Right cardiac atrium (tissue), 5 donors: ENCODE measurements at regions of chr3 and their contacts with region 1.

Region 1: DNA sequence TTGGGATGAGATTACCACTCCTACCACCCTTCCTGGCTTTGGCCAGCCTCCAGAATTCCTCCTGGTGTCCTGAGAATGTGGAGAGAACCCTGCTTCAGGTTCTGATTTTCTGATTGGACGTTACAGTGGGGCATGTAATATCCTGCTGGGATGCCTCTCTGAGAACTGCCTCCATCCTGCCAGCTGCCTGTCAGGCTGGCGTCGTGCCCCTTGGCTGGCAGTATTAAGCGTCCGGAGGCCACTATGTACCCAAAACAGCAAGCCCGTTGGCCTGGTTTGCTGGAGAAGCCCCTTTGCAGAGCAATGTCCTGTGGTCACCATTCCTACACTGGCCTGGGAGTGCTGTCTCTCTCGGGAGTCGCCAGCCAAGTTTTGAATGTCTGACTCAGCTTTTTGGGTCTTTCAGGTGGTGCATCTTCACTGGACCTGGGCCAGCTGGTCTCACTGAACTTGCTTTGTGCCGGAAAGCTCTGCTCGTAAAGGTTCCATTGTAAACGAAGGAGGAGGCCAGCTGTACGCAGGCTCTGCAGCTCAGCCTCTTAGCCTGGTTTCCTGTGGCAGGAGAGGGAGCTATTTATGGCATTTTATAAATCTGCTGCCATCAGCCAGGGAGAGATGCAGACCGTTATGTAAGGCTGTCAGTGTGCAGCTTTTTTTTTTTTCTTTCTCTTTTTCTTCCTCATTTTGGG is 19.1 kb upstream of the TRAK1 start:
- DNase-seq: peak; percentile 59 to 89 (median 89)
- ATAC-seq: peak; percentile 80 to 81
- H3K4me3 ChIP-seq: peak overlapping the region; percentile 34
- H3K27ac ChIP-seq: peak overlapping the region; percentile 98
- H3K4me1 ChIP-seq: peaks cover 29% of the 10 kb centered on the region
- H3K27me3 ChIP-seq: no peaks in the 10 kb centered on the region

Region 2: DNA sequence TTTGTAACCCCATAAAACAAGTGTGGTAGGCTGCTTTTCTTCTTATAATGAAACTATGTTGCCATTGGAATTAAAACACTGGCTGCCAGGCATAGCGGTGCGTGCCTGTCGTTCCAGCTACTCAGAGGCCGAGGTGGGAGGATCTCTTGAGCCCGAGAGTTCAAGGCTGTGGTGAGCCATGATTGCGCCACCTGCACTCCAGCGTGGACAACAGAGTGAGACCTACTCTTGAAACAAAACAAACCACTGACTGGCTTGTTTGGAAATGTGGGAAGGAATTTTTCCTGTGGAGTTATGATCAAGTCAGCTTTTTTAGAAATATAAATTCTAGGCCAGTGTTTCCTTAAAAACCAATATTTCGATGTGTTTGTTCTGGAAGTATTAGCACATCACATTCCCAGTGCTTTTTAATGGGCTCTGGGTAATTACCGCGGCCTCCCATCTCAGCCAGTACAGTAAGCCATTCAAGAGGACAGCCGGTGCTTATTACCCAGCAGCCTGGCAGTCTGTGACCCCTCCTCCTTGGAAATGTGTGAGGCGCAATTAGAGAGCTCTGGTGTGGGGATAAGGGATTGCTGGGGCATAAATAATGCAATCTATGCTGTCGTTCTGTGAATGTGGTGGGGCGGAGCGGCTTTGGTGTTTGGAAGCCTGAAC is 39.2 kb before region 1 on chr3:
- intact Hi-C with region 1: loop called in 1 of 4 experiments (anchors 5 kb)
- DNase-seq: peak; percentile 71 to 87 (median 74)
- ATAC-seq: peak; percentile 42 to 44
- H3K4me3 ChIP-seq: no peak overlapping the region
- H3K27ac ChIP-seq: peak overlapping the region; percentile 80
- H3K4me1 ChIP-seq: peaks cover 29% of the 10 kb centered on the region
- H3K27me3 ChIP-seq: no peaks in the 10 kb centered on the region

Region 3: DNA sequence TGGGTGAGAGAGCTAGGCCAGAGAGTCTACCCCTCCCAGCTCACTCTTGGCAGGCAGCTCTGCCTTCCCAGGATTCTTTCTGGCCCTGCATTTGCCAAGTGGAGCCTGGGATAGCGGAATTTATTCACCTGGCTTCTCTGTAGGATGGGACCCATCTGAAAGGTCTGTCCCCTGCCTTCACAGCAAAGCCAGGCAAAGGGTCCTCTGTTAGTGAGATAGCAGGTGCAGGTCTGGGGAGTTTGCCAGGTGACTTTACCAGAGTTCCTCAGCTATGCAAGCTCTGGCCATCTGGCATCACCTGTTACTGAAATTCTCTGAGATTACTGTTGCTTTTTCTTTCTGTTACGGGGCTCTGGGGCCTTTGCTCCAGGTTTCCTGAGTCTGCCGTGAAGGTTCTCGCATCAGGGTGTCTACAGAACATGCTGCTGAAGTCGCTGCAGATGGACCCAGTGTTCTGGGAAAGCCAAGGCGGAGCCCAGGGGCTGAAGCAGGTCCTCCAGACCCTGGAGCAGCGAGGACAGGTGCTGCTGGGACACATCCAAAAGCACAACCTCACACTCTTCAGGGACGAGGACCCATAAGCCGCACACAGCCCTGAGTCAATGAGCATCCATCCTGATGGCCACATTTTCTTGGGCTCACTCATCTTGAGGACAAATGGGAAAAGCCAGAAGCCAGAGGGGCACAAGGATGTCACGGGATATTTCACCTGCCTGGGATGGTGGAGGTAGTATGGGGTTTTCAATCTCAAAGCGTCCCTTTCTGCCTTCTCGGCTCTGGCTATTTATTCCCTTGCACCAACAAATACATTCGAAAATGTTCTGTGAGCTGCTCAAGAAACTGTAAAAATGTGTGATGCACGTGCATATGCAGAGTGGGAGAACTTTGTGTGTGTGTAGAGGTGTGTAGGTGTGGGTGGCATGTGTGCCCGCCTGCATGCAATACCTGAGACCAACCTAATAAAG is 984.0 kb after region 1 on chr3:
- intact Hi-C with region 1: no loop called
- DNase-seq: no peak
- ATAC-seq: no peak
- H3K4me3 ChIP-seq: no peak overlapping the region
- H3K27ac ChIP-seq: no peak overlapping the region
- H3K4me1 ChIP-seq: no peaks in the 10 kb centered on the region
- H3K27me3 ChIP-seq: no peaks in the 10 kb centered on the region